SK-N-SH (cell line): ENCODE measurements at regions of chr20 and their contacts with region 1.

Region 1: GRCh38 chr20:3716195-3716834 is 3.9 kb upstream of the SIGLEC1 start:
- DNase-seq: peak; percentile 82
- H3K4me3 ChIP-seq: no peak overlapping the region
- H3K27ac ChIP-seq: no peak overlapping the region
- H3K4me1 ChIP-seq: no peaks in the 10 kb centered on the region
- H3K27me3 ChIP-seq: peaks cover 9% of the 10 kb centered on the region; the same call in 1 of the 2 replicates
- CTCF ChIP-seq: peak; percentile 66
- EP300 ChIP-seq: no peak
- RAD21 ChIP-seq: peak; percentile 87

Region 2: GRCh38 chr20:3739054-3739925 is 23.0 kb after region 1 on chr20:
- CTCF ChIA-PET with region 1: interaction called, 12 read pairs
- POLR2A ChIA-PET with region 1: no interaction called
- DNase-seq: no peak
- H3K4me3 ChIP-seq: no peak overlapping the region
- H3K27ac ChIP-seq: no peak overlapping the region; a peak in 1 of 4 replicates
- H3K4me1 ChIP-seq: peaks cover 0 to 22% of the 10 kb centered on the region in 2 experiments; a peak in 1 of 4 replicates
- H3K27me3 ChIP-seq: no peaks in the 10 kb centered on the region
- CTCF ChIP-seq: no peak
- EP300 ChIP-seq: no peak
- RAD21 ChIP-seq: no peak

Region 3: GRCh38 chr20:3744806-3745685 is 28.7 kb after region 1 on chr20:
- CTCF ChIA-PET with region 1: interaction called, 60 read pairs
- POLR2A ChIA-PET with region 1: interaction called, 3 read pairs
- DNase-seq: peak; percentile 90
- H3K4me3 ChIP-seq: peak overlapping the region in 1 of 2 experiments; percentile 34; a peak in 2 of 4 replicates
- H3K27ac ChIP-seq: no peak overlapping the region
- H3K4me1 ChIP-seq: peaks cover 0 to 21% of the 10 kb centered on the region in 2 experiments; a peak in 1 of 4 replicates
- H3K27me3 ChIP-seq: no peaks in the 10 kb centered on the region
- CTCF ChIP-seq: no peak
- EP300 ChIP-seq: no peak
- RAD21 ChIP-seq: no peak

Region 4: DNA sequence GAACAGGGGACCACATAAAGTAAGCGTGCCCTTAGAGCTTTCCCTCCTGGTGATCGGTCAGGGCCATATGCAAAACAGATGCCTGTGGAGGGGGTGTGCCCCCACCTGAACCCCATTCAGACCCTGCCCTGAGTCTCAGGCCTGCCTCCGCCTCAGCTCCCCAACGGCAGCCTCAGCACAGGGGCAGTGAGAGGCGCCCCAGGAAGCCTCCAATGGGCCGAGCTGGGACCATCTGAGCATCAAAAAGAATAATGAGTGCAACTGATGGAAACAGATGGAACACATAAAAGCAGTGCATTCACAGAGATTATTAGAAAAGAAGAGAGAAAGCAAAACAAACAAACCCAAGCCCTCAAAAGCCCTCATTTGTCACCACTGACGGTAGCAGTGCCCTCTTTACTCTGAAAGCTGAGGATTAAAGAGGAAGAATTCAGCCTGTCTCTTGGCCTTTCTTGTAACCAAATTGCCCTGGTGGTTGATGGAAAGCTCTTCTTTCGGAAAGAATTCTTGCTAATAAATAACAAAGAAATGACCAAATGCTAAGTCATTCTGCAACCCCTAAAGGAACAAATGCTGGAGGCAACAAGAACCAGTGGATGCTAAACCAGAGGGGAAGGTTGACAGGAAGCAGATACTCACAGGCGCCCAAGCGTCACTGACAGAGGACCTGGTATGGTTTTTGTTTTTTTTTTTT is 44.5 kb after region 1 on chr20:
- CTCF ChIA-PET with region 1: interaction called, 13 read pairs
- POLR2A ChIA-PET with region 1: no interaction called
- DNase-seq: no peak
- H3K4me3 ChIP-seq: no peak overlapping the region
- H3K27ac ChIP-seq: no peak overlapping the region
- H3K4me1 ChIP-seq: peaks cover 0 to 3% of the 10 kb centered on the region in 2 experiments; a peak in 1 of 4 replicates
- H3K27me3 ChIP-seq: no peaks in the 10 kb centered on the region
- CTCF ChIP-seq: no peak
- EP300 ChIP-seq: no peak
- RAD21 ChIP-seq: no peak

Region 5: GRCh38 chr20:3767427-3768341 is 51.4 kb after region 1 on chr20 and contains the start of gene ADISSP:
- CTCF ChIA-PET with region 1: interaction called, 27 read pairs
- POLR2A ChIA-PET with region 1: no interaction called
- DNase-seq: peak; percentile 99
- H3K4me3 ChIP-seq: peak within 1 kb of the TSS; percentile 83 to 93
- H3K27ac ChIP-seq: peak within 1 kb of the TSS; percentile 94 to 95
- H3K4me1 ChIP-seq: peaks cover 9 to 22% of the 10 kb centered on the region in 2 experiments; a peak in 3 of 4 replicates
- H3K27me3 ChIP-seq: no peaks in the 10 kb centered on the region
- CTCF ChIP-seq: peak; percentile 28
- EP300 ChIP-seq: no peak
- RAD21 ChIP-seq: no peak
- polyA plus RNA-seq, gene ADISSP: 59.9 and 73.9 TPM in 2 replicates

Region 6: GRCh38 chr20:3781153-3781910 is 65.0 kb after region 1 on chr20 and contains the start of gene SPEF1:
- CTCF ChIA-PET with region 1: interaction called, 16 read pairs
- POLR2A ChIA-PET with region 1: no interaction called
- DNase-seq: peak; percentile 95
- H3K4me3 ChIP-seq: peak within 1 kb of the TSS; percentile 51 to 68
- H3K27ac ChIP-seq: peak within 1 kb of the TSS in 1 of 2 experiments; percentile 28; a peak in 2 of 4 replicates
- H3K4me1 ChIP-seq: peaks cover 20 to 38% of the 10 kb centered on the region in 2 experiments; a peak in 3 of 4 replicates
- H3K27me3 ChIP-seq: no peaks in the 10 kb centered on the region
- CTCF ChIP-seq: peak; percentile 68
- EP300 ChIP-seq: no peak
- RAD21 ChIP-seq: peak; percentile 60
- polyA plus RNA-seq, gene SPEF1: 1.6 and 1.8 TPM in 2 replicates